K562 (cell line): ENCODE measurements at regions of chr7 and their contacts with region 1.

Region 1: DNA sequence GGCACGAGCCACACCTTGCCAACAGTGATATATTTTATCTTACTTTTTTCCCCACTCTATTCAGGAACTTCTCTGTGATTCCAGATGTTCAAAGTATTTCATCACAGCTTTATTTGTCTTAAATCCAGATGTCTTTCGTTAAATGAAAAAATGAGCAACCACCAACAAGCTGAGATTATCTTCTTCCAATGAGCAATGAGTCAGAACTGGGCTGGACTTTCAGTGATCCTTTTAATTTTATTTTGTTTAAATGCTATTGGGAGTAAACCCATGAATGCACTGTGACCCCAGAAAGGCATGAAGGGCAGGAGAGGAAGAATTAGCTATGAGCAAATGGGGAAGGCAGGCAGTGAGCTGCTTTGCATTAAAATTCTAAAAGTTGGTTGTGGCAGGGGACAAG is 77.6 kb upstream of the IMMP2L start:
- DNase-seq: no peak
- ATAC-seq: no peak
- H3K4me3 ChIP-seq: no peak overlapping the region
- H3K27ac ChIP-seq: no peak overlapping the region
- H3K4me1 ChIP-seq: no peaks in the 10 kb centered on the region
- H3K27me3 ChIP-seq: no peaks in the 10 kb centered on the region
- CTCF ChIP-seq: no peak
- EP300 ChIP-seq: no peak
- POLR2A ChIP-seq: no peak
- RAD21 ChIP-seq: no peak

Region 2: GRCh38 chr7:111730476-111731300 is 90.8 kb after region 1 on chr7:
- CTCF ChIA-PET with region 1: interaction called, 4 read pairs
- POLR2A ChIA-PET with region 1: no interaction called
- in situ Hi-C with region 1: no loop called
- intact Hi-C with region 1: loop called (anchors 1 kb)
- DNase-seq: peak; percentile 65 to 86 (median 71)
- ATAC-seq: peak; percentile 89
- H3K4me3 ChIP-seq: no peak overlapping the region
- H3K27ac ChIP-seq: no peak overlapping the region
- H3K4me1 ChIP-seq: peaks cover 3 to 10% of the 10 kb centered on the region in 2 experiments; a peak in 3 of 5 replicates
- H3K27me3 ChIP-seq: no peaks in the 10 kb centered on the region
- CTCF ChIP-seq: peak; percentile 82 to 93 (median 89)
- EP300 ChIP-seq: no peak
- POLR2A ChIP-seq: no peak
- RAD21 ChIP-seq: peak; percentile 79 to 95